ENCODE measurements at regions of chr10 and their contacts with region 1.

Region 1: GRCh38 chr10:101840741-101841453 is 2.7 kb downstream of the KCNIP2 start:
- DNase-seq: peak; percentile 80
- H3K4me3 Mint-ChIP-seq: peak overlapping the region; percentile 78
- H3K27ac Mint-ChIP-seq: peak overlapping the region; percentile 38
- H3K4me1 Mint-ChIP-seq: peaks cover 42% of the 10 kb centered on the region
- H3K27me3 Mint-ChIP-seq: peaks cover 19% of the 10 kb centered on the region

Region 2: DNA sequence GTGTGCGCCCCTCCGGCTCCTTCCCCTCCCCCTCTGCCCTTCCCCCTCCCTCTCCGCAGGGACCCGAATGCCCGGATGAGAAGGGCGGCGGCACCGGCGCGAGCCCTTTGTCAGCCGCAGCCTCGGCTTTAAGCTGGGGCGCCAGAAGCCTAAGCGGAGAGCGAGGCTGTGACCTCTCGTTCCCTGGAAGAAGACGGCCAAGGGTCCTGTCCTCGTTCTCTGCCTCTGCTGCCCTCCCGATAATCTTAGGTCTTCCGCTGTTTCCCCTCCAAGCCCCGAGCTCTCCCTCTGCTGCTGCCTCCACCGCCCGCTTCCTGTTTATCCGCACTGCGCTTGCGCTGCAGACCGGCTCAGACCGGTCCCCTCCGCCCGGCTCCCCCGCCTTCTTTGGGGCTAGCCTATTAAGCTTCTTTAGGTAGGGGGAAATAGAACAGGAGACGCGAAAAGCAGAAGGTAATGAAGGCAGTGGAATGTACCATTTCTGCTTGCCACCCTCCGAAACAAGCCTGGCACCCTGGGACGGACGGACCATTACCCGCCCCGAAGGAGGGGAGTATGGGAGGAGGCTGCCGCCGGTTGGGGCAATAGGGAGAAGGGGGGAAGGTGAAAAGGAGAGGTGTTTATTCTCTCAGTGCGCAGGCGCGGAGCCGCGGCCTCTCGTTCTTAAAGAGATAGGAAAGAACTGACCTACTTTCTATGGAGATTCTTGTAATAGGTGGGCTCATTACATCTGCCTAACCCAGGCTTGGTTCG is 22.6 kb before region 1 on chr10 and contains the start of gene OGA:
- CTCF ChIA-PET with region 1: interaction called, 55 read pairs
- POLR2A ChIA-PET with region 1: interaction called, 173 read pairs
- DNase-seq: peak; percentile 99
- H3K4me3 Mint-ChIP-seq: peak within 1 kb of the TSS; percentile 96
- H3K27ac Mint-ChIP-seq: peak within 1 kb of the TSS; percentile 96
- H3K4me1 Mint-ChIP-seq: peaks cover 41% of the 10 kb centered on the region
- H3K27me3 Mint-ChIP-seq: no peaks in the 10 kb centered on the region
- total RNA-seq, gene OGA: 142 to 145 TPM

Region 3: DNA sequence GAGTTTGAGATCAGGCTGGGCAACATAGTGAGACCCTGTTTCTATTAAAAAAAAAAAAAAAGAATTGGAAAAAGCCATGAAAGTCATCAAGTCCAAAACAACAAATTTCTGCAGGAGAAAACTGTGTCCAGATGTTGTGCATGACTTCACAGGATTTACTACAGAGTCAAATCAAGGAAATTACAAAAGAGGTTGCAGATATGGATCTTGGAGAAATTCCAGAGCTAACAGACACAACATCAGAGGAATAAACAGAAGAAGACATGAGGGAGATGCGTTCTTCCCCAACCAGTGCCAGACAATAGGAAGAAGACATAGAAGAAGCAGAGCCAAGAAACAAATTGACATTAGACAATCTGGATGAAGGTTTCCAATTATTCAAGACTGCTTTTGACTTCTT is 27.0 kb after region 1 on chr10:
- CTCF ChIA-PET with region 1: interaction called, 12 read pairs
- POLR2A ChIA-PET with region 1: no interaction called
- DNase-seq: no peak
- H3K4me3 Mint-ChIP-seq: no peak overlapping the region
- H3K27ac Mint-ChIP-seq: no peak overlapping the region
- H3K4me1 Mint-ChIP-seq: peaks cover 2% of the 10 kb centered on the region
- H3K27me3 Mint-ChIP-seq: no peaks in the 10 kb centered on the region

Region 4: GRCh38 chr10:101968940-101969321 is 128.0 kb after region 1 on chr10:
- CTCF ChIA-PET with region 1: interaction called, 12 read pairs
- POLR2A ChIA-PET with region 1: no interaction called
- DNase-seq: no peak
- H3K4me3 Mint-ChIP-seq: no peak overlapping the region
- H3K27ac Mint-ChIP-seq: peak overlapping the region; percentile 12
- H3K4me1 Mint-ChIP-seq: peaks cover 26% of the 10 kb centered on the region
- H3K27me3 Mint-ChIP-seq: no peaks in the 10 kb centered on the region

Region 5: DNA sequence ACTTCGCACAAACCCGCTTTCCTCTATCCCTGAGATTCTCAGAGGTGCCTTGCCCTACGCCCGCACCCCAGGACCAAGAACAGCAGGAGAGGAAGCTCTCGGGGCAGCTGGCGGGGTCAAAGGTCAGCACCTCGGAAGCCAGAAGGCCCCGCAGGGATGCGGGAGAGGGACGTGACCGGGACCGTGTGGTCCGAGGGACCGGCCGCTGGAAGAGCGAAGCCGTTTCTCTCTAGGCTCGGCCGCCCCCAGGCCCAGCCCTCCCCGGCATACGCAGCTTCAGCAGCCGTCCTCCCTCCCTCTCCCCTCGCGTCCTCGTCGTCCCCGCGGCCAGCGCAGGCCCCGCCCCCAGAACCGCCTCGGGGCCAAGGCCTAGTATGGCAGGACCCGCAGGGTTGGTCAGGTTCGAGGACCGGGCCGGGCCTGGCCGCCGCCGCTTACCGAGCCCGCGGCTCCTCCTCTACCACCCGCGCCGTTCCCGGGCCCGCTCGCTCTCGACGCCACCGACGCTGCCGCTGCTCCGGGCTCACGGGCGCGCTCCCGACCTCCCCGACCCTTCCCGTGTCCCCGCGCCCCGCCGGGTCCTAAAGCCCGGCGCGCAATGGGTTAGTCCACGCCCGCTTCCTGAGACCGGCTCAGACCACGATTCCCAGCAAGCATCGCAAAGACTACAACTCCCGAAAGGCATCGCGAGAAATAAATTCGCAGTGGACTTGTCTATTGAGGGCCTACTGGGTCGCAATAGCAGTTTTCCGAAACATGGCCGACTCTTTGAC is 214.9 kb after region 1 on chr10 and contains the start of gene ARMH3:
- CTCF ChIA-PET with region 1: interaction called, 13 read pairs
- POLR2A ChIA-PET with region 1: no interaction called
- DNase-seq: peak; percentile 93
- H3K4me3 Mint-ChIP-seq: peak within 1 kb of the TSS; percentile 99
- H3K27ac Mint-ChIP-seq: peak within 1 kb of the TSS; percentile 86
- H3K4me1 Mint-ChIP-seq: peaks cover 39% of the 10 kb centered on the region
- H3K27me3 Mint-ChIP-seq: no peaks in the 10 kb centered on the region
- total RNA-seq, gene ARMH3: 22.8 to 23.9 TPM

Region 6: DNA sequence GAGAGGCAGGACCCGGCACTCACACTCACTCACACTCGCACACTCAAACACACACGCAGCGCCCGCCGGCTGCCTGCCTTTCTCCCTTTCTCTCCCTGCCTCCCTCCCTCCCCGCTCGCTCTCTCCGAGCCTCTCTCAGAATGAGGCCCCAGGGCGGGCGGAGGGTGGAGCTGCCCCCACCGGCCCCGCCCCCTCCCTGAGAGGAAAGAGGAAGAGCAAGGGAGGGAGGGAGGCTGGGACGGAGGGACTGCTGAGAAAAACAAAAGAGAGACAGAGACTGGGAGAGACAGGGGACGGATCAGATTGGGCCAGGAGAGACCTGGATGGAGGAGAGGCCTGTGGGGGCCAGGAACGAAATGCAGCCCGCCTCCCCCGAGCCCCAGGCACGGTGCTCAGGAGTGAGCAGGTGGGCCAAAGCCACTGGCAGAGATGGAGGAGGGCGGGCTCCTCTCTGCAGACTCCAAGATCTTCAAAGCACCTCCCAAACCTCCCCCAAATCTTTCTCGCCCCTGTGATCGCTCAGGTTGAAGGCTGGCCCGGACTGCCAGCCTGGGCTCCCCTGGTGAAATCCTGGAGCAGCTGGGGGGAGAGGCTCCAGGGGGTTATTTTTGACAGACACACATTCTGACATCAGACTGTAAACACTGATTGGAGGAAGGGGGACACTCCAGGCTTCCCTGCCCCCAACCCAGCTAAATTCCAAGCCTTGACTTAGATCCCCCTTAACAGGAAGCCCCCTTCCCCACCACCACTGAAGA is 274.1 kb after region 1 on chr10:
- CTCF ChIA-PET with region 1: interaction called, 11 read pairs
- POLR2A ChIA-PET with region 1: interaction called, 3 read pairs
- DNase-seq: peak; percentile 91
- H3K4me3 Mint-ChIP-seq: peak overlapping the region; percentile 76
- H3K27ac Mint-ChIP-seq: peak overlapping the region; percentile 91
- H3K4me1 Mint-ChIP-seq: peaks cover 63% of the 10 kb centered on the region
- H3K27me3 Mint-ChIP-seq: no peaks in the 10 kb centered on the region